Dorsolateral prefrontal cortex (tissue), 120 donors: ENCODE measurements at regions of chr1 and their contacts with region 1.

Region 1: GRCh38 chr1:105793536-105794146 is 1262.8 kb upstream of the PRMT6 start:
- DNase-seq: peak in 4 of 10 donors; percentile 36 to 58 (median 54)
- H3K4me3 ChIP-seq: no peak overlapping the region
- H3K27ac ChIP-seq: no peak overlapping the region
- H3K27me3 ChIP-seq: peaks cover 0 to 3% (median 0%) of the 10 kb centered on the region in 45 donors
- CTCF ChIP-seq: peak; percentile 38 to 79 (median 65)

Region 2: DNA sequence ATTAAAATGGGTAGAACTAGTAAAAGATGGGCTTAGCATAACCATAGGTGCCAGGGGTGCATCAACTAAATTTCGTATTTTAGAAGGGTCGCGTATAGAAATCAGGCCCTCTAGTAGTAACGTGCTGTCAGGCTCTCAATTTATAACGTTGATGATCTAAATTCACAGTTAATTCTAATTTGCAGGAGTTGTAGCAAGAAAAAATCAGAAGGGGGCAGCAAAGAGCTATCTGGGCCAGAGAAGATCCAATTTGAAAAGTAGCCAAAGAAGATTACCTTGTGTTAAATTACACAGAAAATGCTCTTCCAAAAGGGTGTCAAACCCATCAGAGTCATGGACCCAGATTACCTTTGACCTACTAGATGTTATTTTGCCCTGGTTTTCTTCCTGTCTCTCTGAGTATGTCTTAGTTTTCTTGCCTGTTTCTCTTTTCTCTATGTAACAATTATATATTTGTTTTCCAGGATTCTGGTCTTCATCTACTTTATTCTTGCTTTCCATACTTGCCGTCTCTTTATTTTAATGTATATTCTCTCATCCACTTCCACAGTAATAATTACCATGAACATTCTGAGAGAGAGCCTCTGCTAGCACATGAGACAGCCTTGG is 1013.1 kb before region 1 on chr1:
- intact Hi-C with region 1: loop called (anchors 5 to 10 kb)
- DNase-seq: no peak
- H3K4me3 ChIP-seq: no peak overlapping the region
- H3K27ac ChIP-seq: no peak overlapping the region
- H3K27me3 ChIP-seq: peaks cover 0 to 6% (median 0%) of the 10 kb centered on the region in 45 donors
- CTCF ChIP-seq: peak; percentile 56 to 90 (median 78)

Region 3: DNA sequence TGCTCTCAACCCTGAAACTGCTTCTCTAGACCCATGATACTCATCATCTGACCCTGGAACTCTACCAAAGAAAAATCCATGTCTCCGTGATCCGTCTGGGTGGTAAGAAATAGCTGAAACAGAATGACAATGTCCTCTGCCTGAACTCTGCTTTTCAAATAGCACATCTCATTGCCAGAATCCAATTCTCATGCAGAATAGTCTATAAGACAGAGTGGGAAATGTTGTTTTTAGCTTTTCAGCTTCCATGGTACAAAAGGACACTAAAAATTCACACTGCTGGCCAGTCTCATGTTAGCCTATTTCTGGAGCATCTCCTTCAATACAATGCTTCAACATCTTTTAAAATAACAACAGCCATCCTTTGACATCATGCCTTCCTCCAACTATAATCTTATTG is 92.9 kb before region 1 on chr1:
- intact Hi-C with region 1: no loop called
- DNase-seq: no peak
- H3K4me3 ChIP-seq: no peak overlapping the region
- H3K27ac ChIP-seq: no peak overlapping the region
- H3K27me3 ChIP-seq: no peaks in the 10 kb centered on the region
- CTCF ChIP-seq: no peak